ENCODE measurements at regions of chr14 and their contacts with region 1.

Region 1: GRCh38 chr14:32710731-32711680 is 227.7 kb upstream of the NPAS3 start:
- DNase-seq: peak; percentile 27
- CTCF ChIP-seq: no peak

Region 2: DNA sequence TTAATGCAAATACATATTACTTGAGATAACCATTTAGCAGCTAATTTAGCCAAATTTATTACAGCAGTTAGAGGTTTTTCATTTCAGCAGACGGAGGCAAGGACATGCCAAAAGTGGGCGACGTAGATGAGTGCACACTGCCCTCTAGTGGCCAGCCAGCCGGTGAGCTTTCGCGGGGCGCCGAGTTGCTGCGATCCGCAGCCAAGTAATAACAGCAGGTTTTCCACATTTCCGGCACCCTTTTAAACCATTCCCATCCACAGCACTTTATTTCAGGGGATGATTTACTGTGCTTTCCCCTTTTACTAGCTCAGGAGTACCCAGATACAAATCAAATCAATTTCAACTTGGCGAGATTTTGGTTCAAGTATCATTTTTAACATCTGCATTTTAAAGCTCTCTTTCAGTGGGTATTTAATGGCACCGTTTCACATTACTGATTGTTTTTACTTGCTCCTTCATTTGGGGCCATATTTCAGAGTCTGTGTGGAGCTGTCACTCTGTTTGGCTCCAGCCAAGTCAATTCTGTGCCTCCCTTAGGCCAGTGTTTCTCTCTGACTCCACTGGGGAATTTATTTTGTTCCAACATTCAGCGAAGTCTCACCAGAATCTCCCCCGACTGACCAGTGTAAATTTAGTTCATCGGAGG is 1081.8 kb after region 1 on chr14:
- in situ Hi-C with region 1: loop called (anchors 25 kb)
- DNase-seq: peak; percentile 77
- CTCF ChIP-seq: peak; percentile 88

Region 3: GRCh38 chr14:34322940-34323418 is 1612.0 kb after region 1 on chr14:
- in situ Hi-C with region 1: loop called (anchors 25 kb)
- DNase-seq: peak; percentile 84
- CTCF ChIP-seq: peak; percentile 60

Measured in GM13976 (cell line).